GM10248 (cell line): ENCODE measurements at regions of chr1 and their contacts with region 1.

Region 1: DNA sequence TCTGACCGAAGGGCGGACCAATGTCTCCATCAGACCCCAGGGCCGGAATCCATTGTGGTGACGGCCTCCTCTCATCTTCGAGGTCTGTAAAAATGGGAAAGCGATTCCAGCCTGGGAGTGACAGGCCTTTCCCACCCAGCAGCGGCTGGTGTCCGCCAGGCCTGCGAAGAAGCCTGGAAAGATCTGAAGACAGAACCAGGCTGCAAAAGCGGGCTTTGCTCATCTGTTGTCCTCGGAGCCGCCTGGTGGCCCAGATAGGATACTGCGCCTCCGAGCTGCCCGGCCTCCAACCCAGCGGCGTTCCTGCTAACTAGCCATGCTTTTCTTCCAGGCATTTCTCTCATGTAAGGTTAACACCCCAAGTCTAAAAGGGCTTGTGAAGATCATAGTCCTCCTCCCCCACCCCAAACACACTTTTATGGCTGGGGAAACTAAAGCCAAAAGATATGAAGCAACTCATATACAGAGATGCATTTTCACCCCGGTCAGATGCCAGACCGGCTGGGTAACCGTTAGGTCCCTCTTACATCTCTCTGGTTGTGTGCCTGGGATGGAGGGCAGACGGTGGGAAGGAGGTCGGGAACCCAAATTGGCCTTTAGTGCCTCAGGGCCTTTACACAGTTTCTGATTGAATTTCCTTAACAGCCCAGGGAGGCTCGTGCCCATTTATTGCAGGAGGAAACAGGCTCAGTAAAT is 1.9 kb upstream of the DHRS3 start:
- DNase-seq: peak; percentile 85
- CTCF ChIP-seq: peak; percentile 98

Region 2: DNA sequence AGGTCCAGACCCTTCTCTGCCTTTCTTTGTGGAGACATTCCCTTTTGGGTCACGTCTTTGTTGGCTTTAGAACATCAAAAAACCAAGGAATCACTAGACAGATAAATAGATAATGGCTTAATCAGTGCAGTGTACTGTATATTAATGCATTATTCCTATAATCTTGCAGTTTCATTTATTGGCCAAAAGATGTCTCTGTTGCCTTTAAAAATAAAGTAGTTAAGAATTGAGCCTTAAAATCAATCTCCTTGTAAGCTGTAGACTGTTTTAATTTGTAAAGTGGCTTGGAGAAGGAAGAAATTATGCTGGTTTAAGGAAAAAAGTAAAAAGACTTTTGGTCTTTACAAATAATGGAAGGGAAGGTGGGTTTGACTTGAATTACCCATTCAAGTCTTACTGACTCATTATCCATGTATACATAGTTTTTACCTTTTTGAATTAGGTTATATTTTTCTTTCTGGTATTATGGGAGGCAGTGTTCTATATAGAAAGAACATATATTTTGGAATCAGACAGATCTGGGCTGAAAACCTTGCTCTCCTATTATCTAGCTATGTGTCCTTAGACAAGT is 305.5 kb before region 1 on chr1:
- CTCF ChIA-PET with region 1: interaction called, 13 read pairs
- POLR2A ChIA-PET with region 1: no interaction called
- DNase-seq: peak; percentile 25
- CTCF ChIP-seq: peak; percentile 27

Region 3: DNA sequence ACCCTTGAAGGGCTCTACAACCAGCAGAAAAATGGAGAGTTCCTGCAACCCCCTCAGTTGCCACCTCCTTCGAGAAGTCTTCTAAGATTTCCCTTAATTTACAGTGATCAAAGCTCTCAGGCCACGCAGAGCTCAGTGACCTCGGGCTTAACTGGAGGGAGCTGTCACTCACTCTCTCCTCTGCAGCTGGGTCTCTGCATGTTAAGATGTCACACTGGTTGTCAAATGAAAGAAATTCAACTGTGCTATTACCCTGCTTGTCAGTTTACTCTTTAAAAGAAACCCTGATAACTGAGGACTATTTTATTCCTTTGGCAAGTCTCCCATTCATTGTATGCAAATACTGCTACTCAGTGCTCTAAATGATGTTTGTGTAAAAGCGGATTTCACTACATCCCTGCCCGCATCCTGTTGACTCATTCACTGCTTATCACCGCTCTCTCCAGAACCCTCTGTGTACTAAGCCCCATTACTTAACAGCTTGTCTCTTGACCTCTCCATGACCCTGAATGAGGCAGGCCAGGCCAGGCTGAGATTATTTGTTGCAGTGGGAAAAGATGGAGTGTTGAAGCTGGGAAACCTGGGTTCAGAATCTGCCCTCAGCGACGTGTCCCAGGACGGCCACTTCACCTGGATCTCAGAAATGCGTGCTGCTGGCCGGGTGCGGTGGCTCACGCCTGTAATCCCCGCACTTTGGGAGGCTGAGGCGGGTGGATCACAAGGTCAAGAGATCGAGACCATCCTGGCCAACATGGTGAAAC is 15.6 kb before region 1 on chr1:
- CTCF ChIA-PET with region 1: interaction called, 33 read pairs
- POLR2A ChIA-PET with region 1: no interaction called
- DNase-seq: no peak
- CTCF ChIP-seq: no peak

Region 4: GRCh38 chr1:12630946-12631530 is 11.1 kb after region 1 on chr1:
- CTCF ChIA-PET with region 1: interaction called, 24 read pairs
- POLR2A ChIA-PET with region 1: no interaction called
- DNase-seq: no peak
- CTCF ChIP-seq: no peak

Region 5: GRCh38 chr1:12669529-12670068 is 49.7 kb after region 1 on chr1:
- CTCF ChIA-PET with region 1: no interaction called
- POLR2A ChIA-PET with region 1: no interaction called
- DNase-seq: no peak
- CTCF ChIP-seq: no peak

Region 6: GRCh38 chr1:13828454-13829151 is 1208.7 kb after region 1 on chr1:
- CTCF ChIA-PET with region 1: no interaction called
- POLR2A ChIA-PET with region 1: no interaction called
- DNase-seq: peak; percentile 77
- CTCF ChIP-seq: peak; percentile 56